ENCODE measurements at regions of chr12 and their contacts with region 1.

Region 1: GRCh38 chr12:56117778-56118687 is at the start of gene ZC3H10:
- DNase-seq: peak; percentile 100

Region 2: DNA sequence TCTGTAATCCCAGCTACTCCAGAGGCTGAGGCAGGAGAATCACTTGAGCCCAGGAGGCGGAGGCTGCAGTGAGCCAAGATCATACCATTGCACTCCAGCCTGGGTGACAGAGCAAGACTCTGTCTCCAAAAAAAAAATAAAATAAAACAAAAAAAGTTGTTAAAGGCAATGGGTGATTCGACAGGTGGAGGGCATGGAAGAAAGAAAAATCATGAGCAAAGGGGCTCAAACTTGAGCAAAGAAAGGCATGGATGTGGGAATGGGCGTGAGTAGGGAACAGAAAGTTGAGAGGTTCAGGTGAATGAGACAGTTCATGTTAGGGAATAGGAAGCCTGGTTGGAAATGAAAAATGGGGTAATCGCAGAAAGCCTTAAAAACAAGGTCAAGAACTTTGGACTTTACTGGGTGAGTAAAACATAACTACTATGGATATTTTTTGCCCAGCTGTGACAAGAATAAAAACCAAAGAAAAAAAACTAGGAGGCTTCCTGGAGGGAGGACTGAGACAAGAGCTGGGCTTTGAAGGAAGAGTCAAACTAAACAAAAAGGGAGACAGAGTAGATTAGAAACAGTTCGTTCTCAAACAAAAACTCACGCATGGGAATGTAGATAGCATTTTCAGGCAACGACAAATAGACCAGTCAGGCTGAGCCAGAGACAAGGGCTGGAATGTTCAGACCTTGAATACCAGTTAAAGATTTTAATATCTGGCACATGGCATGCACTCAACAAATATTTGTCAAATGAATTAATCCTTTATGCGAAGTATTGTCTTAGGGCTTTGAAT is 209.1 kb before region 1 on chr12:
- in situ Hi-C with region 1: no loop called
- DNase-seq: no peak

Region 3: DNA sequence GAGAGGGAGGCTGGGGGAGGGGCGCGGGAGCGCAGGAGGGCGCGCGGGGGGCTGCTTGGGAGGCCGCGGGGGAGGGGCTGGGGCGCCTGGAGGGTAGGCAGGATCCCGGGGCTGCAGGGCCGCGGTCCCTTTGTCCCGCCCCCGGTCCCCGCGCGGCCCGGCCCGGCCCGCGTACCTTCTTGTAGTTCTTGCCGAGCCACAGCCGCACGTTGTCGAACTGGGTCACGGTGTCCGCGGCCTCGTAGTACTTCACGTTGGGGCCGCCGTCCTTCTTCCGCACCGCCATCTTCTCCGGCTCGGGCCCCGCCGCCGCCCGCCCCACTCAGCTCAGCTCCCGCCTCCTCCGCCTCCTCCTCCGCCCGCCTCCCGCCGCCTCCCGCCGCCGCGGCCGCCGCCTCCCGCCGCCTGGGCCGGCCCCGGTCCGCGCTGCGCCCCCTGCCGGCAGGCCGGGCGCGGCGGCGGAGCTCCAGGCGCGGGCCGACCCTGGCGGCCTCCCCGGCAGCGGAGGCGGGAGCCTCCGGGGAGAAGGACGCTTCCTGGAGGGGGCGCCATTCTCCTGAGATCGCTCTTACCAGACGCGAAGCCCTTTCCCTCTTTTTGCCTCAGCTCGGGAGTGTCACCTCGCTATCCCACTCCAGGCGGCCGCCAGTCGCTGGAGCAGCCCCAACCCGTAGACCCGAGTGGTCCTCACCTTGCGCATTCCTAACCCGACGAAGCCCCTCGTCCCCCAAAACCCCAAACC is 71.3 kb after region 1 on chr12 and contains the start of gene SMARCC2:
- in situ Hi-C with region 1: loop called (anchors 5 kb)
- DNase-seq: peak; percentile 96

Measured in ACHN (cell line).